AG04449 (cell line): ENCODE measurements at regions of chr12 and their contacts with region 1.

Region 1: DNA sequence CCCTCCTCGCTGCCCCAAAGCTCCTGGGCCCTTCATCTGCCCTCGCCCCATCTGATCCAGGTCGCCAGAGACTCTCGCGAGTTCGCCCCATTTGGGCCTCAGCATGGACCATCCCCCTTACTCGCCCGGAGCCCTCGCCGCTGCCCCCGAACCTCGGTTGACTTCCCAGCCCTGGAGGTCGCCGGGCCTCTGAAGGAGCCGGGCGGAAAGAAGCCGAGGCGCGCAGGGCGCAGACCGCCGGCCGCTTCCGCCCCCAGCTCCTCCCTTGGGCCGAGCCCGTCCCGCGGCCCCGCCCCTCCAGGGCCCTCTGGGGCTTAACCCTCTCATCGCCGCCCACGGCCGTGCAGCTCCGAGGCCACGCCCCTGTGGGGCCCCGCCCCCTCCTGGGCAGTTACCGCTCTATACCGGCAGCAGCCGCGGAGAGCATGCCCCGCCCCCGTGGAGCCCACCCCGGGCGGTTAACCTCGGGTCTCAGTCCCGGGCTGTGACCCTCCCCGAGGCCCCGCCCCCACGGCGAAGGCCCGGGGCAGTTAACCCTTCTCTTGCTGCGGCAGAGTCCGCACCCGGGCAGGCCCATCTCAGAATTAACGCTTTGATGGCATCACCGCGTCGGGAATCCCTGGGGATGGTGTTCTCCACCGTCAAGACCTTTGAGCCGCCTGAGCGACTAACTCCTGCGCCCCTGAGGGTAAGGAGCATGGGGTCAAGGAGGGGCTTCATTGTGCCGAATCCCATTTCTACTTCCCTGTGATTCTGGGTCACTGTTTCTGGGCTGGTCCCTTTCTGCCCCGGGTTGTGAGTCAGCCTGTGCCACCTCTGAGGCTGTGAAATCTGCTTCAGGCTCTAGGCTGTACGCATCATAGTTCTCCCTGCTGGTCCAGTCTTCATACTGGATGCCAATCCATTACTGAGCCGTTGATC is at the start of gene SPSB2:
- DNase-seq: no peak
- H3K4me3 ChIP-seq: peak within 1 kb of the TSS; percentile 78
- CTCF ChIP-seq: no peak

Region 2: DNA sequence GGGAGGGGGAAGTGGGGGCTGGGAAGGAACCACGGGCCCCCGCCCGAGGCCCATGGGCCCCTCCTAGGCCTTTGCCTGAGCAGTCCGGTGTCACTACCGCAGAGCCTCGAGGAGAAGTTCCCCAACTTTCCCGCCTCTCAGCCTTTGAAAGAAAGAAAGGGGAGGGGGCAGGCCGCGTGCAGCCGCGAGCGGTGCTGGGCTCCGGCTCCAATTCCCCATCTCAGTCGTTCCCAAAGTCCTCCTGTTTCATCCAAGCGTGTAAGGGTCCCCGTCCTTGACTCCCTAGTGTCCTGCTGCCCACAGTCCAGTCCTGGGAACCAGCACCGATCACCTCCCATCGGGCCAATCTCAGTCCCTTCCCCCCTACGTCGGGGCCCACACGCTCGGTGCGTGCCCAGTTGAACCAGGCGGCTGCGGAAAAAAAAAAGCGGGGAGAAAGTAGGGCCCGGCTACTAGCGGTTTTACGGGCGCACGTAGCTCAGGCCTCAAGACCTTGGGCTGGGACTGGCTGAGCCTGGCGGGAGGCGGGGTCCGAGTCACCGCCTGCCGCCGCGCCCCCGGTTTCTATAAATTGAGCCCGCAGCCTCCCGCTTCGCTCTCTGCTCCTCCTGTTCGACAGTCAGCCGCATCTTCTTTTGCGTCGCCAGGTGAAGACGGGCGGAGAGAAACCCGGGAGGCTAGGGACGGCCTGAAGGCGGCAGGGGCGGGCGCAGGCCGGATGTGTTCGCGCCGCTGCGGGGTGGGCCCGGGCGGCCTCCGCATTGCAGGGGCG is 339.2 kb before region 1 on chr12 and contains the start of gene GAPDH:
- CTCF ChIA-PET with region 1: no interaction called
- POLR2A ChIA-PET with region 1: no interaction called
- DNase-seq: peak; percentile 86
- H3K4me3 ChIP-seq: peak within 1 kb of the TSS; percentile 97
- CTCF ChIP-seq: no peak

Region 3: GRCh38 chr12:6839482-6840201 is 33.7 kb before region 1 on chr12:
- CTCF ChIA-PET with region 1: interaction called, 11 read pairs
- POLR2A ChIA-PET with region 1: interaction called, 5 read pairs
- DNase-seq: no peak
- H3K4me3 ChIP-seq: no peak overlapping the region
- CTCF ChIP-seq: no peak

Region 4: GRCh38 chr12:6861391-6861790 is 12.0 kb before region 1 on chr12:
- CTCF ChIA-PET with region 1: interaction called, 63 read pairs
- POLR2A ChIA-PET with region 1: interaction called, 4 read pairs
- DNase-seq: no peak
- H3K4me3 ChIP-seq: no peak overlapping the region
- CTCF ChIP-seq: no peak

Region 5: DNA sequence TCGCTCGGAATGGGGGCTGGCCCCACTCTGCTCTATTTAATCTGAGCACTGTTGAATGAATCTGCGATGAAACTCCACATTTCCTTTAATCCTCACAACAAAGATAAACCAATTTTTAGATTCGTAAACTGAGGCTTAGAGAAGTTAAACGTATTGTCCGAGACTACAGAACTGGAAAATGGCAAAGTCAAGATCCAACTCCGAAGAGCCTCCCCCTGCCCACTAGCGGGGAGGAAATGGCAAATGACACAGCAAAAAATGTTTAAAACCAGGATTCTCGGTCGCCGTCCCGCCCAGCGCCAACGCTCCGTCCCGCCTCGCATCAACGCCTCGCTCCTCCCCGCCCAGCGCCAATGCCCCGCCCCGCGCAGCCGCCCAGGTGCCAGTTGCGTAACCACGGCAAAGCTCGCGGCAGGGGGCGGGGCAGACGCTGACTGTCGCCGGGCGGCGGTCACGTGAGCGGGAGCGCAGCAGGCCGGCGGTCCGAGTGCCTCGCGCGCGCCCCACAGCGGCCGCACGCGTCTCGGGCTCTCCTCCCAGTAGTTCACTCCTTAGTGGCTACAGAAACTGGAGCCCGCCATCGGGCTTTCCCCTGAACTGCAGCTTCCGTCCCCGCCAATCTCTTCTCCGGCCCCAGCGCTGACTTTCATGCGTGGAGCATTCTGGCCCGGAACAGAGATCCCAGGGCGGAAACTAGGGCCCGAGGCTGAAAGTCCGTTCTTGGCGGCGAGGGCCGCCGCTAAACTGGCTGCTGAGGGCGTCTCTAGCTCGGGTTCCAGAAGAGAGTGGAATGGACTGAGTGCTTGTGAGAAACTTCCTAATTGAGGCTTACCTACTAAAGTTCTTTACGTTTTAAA is 17.7 kb after region 1 on chr12:
- CTCF ChIA-PET with region 1: interaction called, 88 read pairs
- POLR2A ChIA-PET with region 1: interaction called, 23 read pairs
- DNase-seq: peak; percentile 47
- H3K4me3 ChIP-seq: peak overlapping the region; percentile 57
- CTCF ChIP-seq: peak; percentile 78

Region 6: DNA sequence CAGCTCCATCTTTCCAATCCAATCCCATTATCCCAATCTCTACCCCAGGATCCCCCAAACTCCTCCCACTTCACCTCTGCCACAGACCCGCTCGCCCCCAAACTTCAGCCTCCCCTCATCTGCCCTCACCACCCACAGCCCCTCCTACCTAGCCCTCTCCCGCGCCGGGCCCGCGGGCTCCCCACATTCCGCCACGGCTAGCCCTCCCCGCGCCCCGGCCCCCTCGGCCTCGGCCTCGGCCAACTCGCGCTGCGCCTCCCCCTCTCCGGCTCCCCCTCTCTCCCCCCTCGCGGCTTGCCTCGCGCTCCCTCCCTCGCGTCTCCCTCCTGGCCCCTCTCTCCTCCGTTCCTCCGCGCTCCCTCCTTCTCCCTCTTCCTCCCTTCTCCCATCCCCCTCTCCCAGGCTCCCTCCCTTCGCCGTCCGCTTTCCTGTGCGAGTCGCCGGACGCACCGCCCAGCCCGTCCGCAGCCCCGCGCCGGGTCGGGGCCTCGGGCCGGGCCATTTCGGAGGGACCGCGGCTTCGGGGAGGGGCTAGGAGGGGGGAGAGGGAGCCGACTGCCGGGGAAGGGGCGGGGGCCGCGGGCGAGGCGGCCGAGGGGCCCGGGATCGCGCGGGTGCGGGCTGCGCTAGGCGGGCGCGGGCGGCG is 54.1 kb after region 1 on chr12 and contains the start of gene ATN1:
- CTCF ChIA-PET with region 1: interaction called, 37 read pairs
- POLR2A ChIA-PET with region 1: interaction called, 7 read pairs
- DNase-seq: no peak
- H3K4me3 ChIP-seq: peak within 1 kb of the TSS; percentile 83
- CTCF ChIP-seq: no peak

Region 7: DNA sequence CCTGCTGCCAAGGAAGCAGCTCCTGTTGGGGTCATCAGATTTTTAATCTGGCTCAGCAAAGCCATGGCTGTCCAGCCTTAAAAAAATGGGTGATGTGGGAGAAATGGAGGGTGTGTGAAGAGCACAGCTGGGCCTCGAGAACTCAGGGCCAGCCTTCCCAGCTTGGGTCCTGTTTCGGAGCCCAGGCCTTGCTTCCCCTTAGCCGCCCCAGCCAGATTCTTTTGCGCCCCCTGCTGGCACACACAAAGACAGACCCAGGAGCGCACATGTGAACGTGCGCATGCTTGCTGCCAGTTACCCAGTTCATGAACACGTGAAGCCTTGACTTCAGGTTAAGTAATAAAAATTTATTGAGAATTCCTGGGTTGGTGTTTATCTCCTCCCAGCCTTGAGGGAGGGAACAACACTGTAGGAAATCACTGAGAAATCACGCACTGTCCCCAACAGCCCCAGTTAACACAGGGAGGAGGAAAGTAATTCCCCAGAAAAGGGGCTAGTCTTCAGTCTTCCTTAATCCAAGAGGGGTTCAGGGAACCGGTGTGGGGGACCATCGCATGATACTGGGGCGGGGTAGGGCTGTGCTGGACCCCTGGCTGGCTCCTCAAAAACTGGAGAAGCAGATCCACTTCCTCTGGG is 91.8 kb after region 1 on chr12:
- CTCF ChIA-PET with region 1: interaction called, 36 read pairs
- POLR2A ChIA-PET with region 1: interaction called, 3 read pairs
- DNase-seq: no peak
- H3K4me3 ChIP-seq: no peak overlapping the region
- CTCF ChIP-seq: peak; percentile 93